ENCODE measurements at regions of chr12 and their contacts with region 1.

Region 1: GRCh38 chr12:109093022-109093918 is at the start of gene ALKBH2:
- DNase-seq: peak; percentile 96
- H3K4me3 ChIP-seq: peak within 1 kb of the TSS; percentile 84
- H3K27ac ChIP-seq: peak within 1 kb of the TSS; percentile 63
- H3K4me1 ChIP-seq: peaks cover 62% of the 10 kb centered on the region
- CTCF ChIP-seq: peak; percentile 89
- total RNA-seq, gene ALKBH2: 70.3 and 76.8 TPM in 2 replicates

Region 2: DNA sequence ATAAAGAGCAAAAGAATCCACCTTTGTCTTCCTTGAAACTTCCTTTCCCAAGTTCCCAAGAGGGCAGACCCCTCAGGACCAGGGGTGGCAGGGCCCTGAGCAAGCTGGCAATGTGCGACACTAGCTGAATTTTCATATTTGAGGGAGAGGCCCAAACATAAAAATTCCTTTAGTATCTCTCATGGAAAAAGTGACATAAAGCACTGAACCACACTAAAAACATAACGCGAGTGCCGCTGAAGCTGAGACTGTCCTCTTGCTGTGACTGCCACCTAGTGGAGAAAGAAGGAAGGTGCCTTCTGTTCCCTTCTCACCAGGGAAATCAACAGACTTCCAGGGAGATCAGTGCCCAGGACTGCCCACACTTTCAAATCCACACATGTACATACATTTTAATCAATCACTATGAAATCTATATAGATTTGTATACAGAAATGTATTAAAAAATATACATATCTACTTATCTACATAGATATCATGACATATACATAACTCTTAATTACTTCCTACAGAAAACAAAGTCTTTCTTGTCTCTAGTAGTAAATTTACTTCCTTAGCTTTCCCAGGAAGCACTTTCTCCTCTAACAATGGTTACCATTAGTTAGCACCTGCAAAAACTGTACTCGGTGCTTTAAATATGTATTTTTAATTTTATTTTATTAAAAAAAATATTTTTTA is 289.7 kb before region 1 on chr12:
- CTCF ChIA-PET with region 1: no interaction called
- POLR2A ChIA-PET with region 1: interaction called, 5 read pairs
- intact Hi-C with region 1: loop called (anchors 2 kb)
- DNase-seq: peak; percentile 84
- H3K4me3 ChIP-seq: no peak overlapping the region
- H3K27ac ChIP-seq: no peak overlapping the region
- H3K4me1 ChIP-seq: peaks cover 25% of the 10 kb centered on the region
- CTCF ChIP-seq: peak; percentile 99

Region 3: GRCh38 chr12:108950991-108951739 is 142.1 kb before region 1 on chr12:
- CTCF ChIA-PET with region 1: no interaction called
- POLR2A ChIA-PET with region 1: interaction called, 5 read pairs
- intact Hi-C with region 1: loop called (anchors 1 kb)
- DNase-seq: peak; percentile 83
- H3K4me3 ChIP-seq: no peak overlapping the region
- H3K27ac ChIP-seq: no peak overlapping the region
- H3K4me1 ChIP-seq: peaks cover 20% of the 10 kb centered on the region
- CTCF ChIP-seq: peak; percentile 99

Region 4: GRCh38 chr12:109052414-109053323 is 40.6 kb before region 1 on chr12 and contains the start of gene USP30:
- CTCF ChIA-PET with region 1: no interaction called
- POLR2A ChIA-PET with region 1: interaction called, 13 read pairs
- intact Hi-C with region 1: loop called (anchors 1 kb)
- DNase-seq: peak; percentile 92
- H3K4me3 ChIP-seq: peak within 1 kb of the TSS; percentile 81
- H3K27ac ChIP-seq: peak within 1 kb of the TSS; percentile 85
- H3K4me1 ChIP-seq: peaks cover 42% of the 10 kb centered on the region
- CTCF ChIP-seq: no peak
- total RNA-seq, gene USP30: 15.7 and 17.1 TPM in 2 replicates

Region 5: DNA sequence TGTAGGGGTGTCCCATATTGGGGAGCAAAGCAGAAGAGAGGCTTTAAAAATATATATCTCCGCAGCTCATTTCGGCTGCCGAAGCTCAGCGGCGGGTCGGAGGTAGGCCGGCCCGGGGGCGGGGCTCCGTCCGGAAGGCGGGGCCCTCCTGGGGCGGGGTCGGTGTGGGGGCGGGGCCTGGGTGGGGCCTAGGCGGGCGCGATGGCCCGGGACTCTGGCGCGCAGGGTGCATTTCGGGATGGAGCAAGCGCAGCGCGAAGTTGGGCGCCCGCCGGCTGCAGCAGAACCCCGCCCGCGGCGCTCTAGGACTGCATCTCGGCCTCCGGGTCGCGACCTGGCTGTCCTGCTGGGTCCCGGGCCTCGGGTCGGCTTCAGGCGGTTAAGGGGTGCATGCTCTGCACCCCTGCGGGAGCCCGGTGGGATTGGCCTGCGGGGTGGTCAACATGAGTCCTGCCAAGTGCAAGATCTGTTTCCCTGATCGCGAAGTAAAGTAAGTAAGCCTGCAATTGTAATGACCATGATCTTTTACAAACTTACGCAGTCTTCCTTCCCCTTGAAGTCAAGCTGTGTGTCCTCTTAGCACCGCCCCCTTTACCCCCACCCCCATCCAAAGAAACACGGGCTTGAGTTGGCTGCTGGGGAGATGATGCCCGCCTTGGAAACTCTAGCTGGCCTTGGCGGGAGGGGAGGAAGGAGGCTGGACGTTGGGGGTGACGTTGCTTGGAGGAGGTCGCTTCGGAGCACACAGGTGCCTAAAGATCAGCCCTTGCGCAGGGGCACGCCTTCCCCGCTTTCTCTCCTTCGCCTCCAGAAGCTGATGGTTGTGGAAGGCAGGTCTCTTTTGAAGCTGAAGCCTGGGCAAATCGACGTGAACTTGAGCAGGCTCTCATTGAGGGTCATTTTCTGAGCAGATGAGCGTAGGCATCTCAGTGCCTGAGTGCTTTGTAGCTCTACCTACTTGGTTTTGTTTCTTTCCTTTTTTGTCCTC is 61.5 kb after region 1 on chr12:
- CTCF ChIA-PET with region 1: no interaction called
- POLR2A ChIA-PET with region 1: no interaction called
- intact Hi-C with region 1: loop called (anchors 2 kb)
- DNase-seq: peak; percentile 92
- H3K4me3 ChIP-seq: peak overlapping the region; percentile 77
- H3K27ac ChIP-seq: peak overlapping the region; percentile 84
- H3K4me1 ChIP-seq: peaks cover 35% of the 10 kb centered on the region
- CTCF ChIP-seq: 0 out of 2 replicates have a peak, but pooled peaks have one; percentile 17

Region 6: GRCh38 chr12:109239179-109239578 is 145.9 kb after region 1 on chr12:
- CTCF ChIA-PET with region 1: no interaction called
- POLR2A ChIA-PET with region 1: no interaction called
- intact Hi-C with region 1: no loop called
- DNase-seq: no peak
- H3K4me3 ChIP-seq: no peak overlapping the region
- H3K27ac ChIP-seq: no peak overlapping the region
- H3K4me1 ChIP-seq: no peaks in the 10 kb centered on the region
- CTCF ChIP-seq: no peak

Measured in OCI-LY7 (cell line).